ENCODE measurements at regions of chr6 and their contacts with region 1.

Region 1: GRCh38 chr6:144104898-144105487 is 9.6 kb upstream of the SF3B5 start:
- DNase-seq: peak; percentile 80
- H3K4me3 Mint-ChIP-seq: no peak overlapping the region
- H3K27ac Mint-ChIP-seq: no peak overlapping the region
- H3K4me1 Mint-ChIP-seq: peaks cover 5% of the 10 kb centered on the region
- H3K27me3 Mint-ChIP-seq: no peaks in the 10 kb centered on the region
- CTCF ChIP-seq: peak; percentile 70

Region 2: GRCh38 chr6:144149891-144150709 is 45.1 kb after region 1 on chr6 and contains the start of gene STX11:
- CTCF ChIA-PET with region 1: no interaction called
- POLR2A ChIA-PET with region 1: no interaction called
- intact Hi-C with region 1: loop called (anchors 1 kb)
- DNase-seq: peak; percentile 48
- H3K4me3 Mint-ChIP-seq: peak within 1 kb of the TSS; percentile 67
- H3K27ac Mint-ChIP-seq: peak within 1 kb of the TSS; percentile 22
- H3K4me1 Mint-ChIP-seq: no peaks in the 10 kb centered on the region
- H3K27me3 Mint-ChIP-seq: no peaks in the 10 kb centered on the region
- CTCF ChIP-seq: no peak
- total RNA-seq, gene STX11: 1.1 and 2.1 TPM in 2 replicates

Region 3: GRCh38 chr6:144482142-144482541 is 377.1 kb after region 1 on chr6:
- CTCF ChIA-PET with region 1: interaction called, 28 read pairs
- POLR2A ChIA-PET with region 1: interaction called, 3 read pairs
- intact Hi-C with region 1: loop called (anchors 1 kb)
- DNase-seq: peak; percentile 84
- H3K4me3 Mint-ChIP-seq: no peak overlapping the region
- H3K27ac Mint-ChIP-seq: no peak overlapping the region
- H3K4me1 Mint-ChIP-seq: no peaks in the 10 kb centered on the region
- H3K27me3 Mint-ChIP-seq: no peaks in the 10 kb centered on the region
- CTCF ChIP-seq: peak; percentile 65

Region 4: DNA sequence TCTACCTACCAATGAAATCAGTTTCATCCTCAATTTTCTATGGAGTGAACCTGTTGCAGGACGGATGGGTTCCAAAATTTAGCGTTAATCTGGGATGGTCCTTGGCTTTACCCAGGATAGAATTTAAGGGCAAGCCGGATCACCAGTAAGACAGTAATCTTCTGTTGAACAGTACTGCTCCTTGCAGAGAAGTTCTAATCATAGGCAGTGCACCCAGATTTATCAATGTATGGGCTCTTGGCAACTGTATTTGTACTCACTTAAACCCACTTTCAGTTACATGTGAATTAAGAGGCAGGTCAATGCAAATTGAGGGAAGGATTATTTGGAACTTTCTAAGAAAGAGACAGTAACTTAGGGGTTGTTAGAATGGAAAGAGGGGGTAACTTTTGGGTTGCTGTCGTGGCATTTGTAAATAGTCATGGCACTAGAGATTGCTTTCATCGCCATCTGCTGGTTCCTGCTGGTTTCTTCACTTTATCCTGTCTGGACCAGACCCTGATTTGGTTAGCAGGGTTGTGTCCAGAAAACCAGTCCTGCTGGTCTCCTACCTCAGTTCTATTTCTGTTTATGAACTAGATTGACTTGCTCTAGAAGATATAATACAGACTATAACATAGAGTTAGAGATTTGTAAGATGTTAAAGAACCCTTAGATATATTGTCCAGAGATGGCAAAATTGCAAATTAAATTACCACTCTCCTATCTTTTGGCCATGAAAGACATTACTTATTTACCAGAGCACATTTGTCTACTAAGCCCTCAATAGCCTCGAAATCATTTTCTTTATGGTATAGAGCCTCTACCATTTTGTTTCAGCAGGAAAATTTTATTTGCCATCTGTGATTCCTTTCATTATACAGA is 826.4 kb after region 1 on chr6:
- CTCF ChIA-PET with region 1: no interaction called
- POLR2A ChIA-PET with region 1: no interaction called
- intact Hi-C with region 1: loop called (anchors 5 kb)
- DNase-seq: peak; percentile 59
- H3K4me3 Mint-ChIP-seq: no peak overlapping the region
- H3K27ac Mint-ChIP-seq: no peak overlapping the region
- H3K4me1 Mint-ChIP-seq: no peaks in the 10 kb centered on the region
- H3K27me3 Mint-ChIP-seq: no peaks in the 10 kb centered on the region
- CTCF ChIP-seq: peak; percentile 52